ENCODE measurements at regions of chr6 and their contacts with region 1.

Region 1: DNA sequence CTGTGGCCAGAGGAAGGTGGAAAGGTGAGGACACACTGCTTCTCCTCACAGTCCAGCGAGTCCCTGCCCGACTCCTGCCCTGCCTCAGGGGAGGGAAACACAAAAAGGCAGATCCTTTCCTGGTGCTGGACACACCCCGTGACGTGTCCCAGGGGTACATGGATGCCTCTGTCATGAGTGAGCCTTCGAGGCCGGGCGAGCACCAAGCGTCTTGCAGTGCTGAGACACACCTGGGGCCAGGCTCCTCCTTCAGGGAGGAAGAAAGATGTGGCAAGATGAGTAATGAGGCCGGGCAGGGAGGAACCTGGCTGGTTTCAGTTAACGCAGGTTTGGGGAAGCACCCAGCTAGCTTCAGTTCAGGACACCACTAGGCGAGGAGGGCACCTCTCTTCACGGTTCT is 215.1 kb downstream of the LY86 start:
- DNase-seq: peak; percentile 97
- ATAC-seq: peak; percentile 93
- H3K4me3 ChIP-seq: peak overlapping the region; percentile 8 to 21; a peak in 3 of 4 replicates
- H3K27ac ChIP-seq: peak overlapping the region; percentile 33
- H3K4me1 ChIP-seq: peaks cover 21 to 92% of the 10 kb centered on the region in 2 experiments
- H3K27me3 ChIP-seq: no peaks in the 10 kb centered on the region
- CTCF ChIP-seq: no peak
- POLR2A ChIP-seq: no peak
- RAD21 ChIP-seq: no peak

Region 2: DNA sequence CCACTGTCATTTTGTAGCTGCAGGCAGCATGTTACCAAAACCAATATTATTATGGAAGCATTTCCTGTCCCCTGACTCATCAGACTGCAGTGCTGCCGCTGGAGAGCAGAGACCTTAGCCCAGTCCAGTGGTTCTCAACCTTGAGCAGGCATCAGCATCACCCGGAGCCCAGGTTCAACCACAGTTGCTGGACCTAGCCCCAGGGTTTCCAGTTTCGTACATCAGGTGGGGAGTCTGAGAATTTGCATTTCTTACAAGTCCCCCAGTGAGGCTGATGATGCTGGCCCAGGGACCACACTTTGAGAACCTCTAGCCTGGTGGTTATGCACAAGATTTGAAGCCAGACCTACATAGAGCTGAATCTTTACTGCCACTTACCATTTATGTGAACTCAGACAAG is 167.7 kb before region 1 on chr6:
- CTCF ChIA-PET with region 1: no interaction called
- POLR2A ChIA-PET with region 1: no interaction called
- RAD21 ChIA-PET with region 1: no interaction called
- intact Hi-C with region 1: no loop called
- DNase-seq: no peak
- ATAC-seq: no peak
- H3K4me3 ChIP-seq: no peak overlapping the region
- H3K27ac ChIP-seq: no peak overlapping the region
- H3K4me1 ChIP-seq: no peaks in the 10 kb centered on the region
- H3K27me3 ChIP-seq: peaks cover 4% of the 10 kb centered on the region; the same call in 1 of the 2 replicates
- CTCF ChIP-seq: no peak
- POLR2A ChIP-seq: no peak
- RAD21 ChIP-seq: no peak

Region 3: DNA sequence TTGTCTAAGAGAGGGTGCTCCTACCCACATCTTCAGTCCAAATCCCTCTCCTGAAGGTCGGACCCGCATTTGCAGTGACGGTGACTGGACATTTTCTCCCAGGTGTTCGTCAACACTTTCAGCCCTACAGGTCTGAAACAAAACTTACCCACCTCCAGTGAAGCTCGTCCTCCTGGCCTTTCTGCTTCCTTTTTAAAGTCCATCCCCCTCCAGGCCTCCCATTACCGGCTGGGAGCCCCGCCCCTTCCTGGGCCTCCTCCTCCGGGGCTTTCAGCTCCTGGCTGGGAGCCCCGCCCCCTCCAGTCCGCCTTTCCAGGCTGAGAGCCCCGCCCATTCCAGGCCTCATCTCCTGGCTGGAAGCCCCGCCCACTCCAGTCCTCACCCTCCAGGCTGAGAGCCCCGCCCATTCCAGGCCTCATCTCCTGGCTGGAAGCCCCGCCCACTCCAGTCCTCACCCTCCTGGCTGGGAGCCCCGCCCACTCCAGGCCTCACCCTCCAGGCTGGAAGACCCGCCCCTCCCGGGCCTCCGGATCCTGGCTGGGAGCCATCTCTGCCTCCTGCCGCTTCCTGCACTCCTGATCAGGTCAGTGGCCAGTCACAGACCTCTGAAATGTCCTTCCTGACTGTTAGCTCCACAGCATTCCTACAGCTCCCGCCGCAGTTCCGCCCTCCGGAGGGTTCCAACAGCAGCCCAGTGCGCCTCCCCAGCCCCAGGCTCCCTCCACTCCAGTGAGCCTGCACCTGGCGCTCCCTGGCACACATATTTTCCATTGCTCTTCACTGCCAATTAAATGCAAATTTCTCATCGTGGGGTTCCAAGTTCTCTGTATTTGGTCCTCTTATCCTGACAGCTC is 116.6 kb before region 1 on chr6:
- CTCF ChIA-PET with region 1: no interaction called
- POLR2A ChIA-PET with region 1: no interaction called
- RAD21 ChIA-PET with region 1: no interaction called
- intact Hi-C with region 1: loop called (anchors 5 kb)
- DNase-seq: peak; percentile 93
- ATAC-seq: peak; percentile 94
- H3K4me3 ChIP-seq: peak overlapping the region; percentile 67 to 69
- H3K27ac ChIP-seq: peak overlapping the region; percentile 68
- H3K4me1 ChIP-seq: peaks cover 0 to 19% of the 10 kb centered on the region in 2 experiments; a peak in 3 of 4 replicates
- H3K27me3 ChIP-seq: no peaks in the 10 kb centered on the region
- CTCF ChIP-seq: no peak
- POLR2A ChIP-seq: peak; percentile 36
- RAD21 ChIP-seq: no peak

Region 4: GRCh38 chr6:6826095-6826901 is 22.7 kb after region 1 on chr6:
- CTCF ChIA-PET with region 1: no interaction called
- POLR2A ChIA-PET with region 1: interaction called, 13 read pairs
- RAD21 ChIA-PET with region 1: no interaction called
- intact Hi-C with region 1: no loop called
- DNase-seq: no peak
- ATAC-seq: peak; percentile 74
- H3K4me3 ChIP-seq: peak overlapping the region in 1 of 2 experiments; percentile 22; a peak in 2 of 4 replicates
- H3K27ac ChIP-seq: peak overlapping the region; percentile 69
- H3K4me1 ChIP-seq: peaks cover 44 to 57% of the 10 kb centered on the region in 2 experiments
- H3K27me3 ChIP-seq: no peaks in the 10 kb centered on the region
- CTCF ChIP-seq: no peak
- POLR2A ChIP-seq: no peak
- RAD21 ChIP-seq: no peak

Region 5: GRCh38 chr6:6890400-6890858 is 86.9 kb after region 1 on chr6:
- CTCF ChIA-PET with region 1: no interaction called
- POLR2A ChIA-PET with region 1: no interaction called
- RAD21 ChIA-PET with region 1: no interaction called
- intact Hi-C with region 1: no loop called
- DNase-seq: no peak
- ATAC-seq: peak; percentile 81
- H3K4me3 ChIP-seq: no peak overlapping the region
- H3K27ac ChIP-seq: no peak overlapping the region
- H3K4me1 ChIP-seq: peaks cover 0 to 21% of the 10 kb centered on the region in 2 experiments; a peak in 2 of 4 replicates
- H3K27me3 ChIP-seq: no peaks in the 10 kb centered on the region
- CTCF ChIP-seq: no peak
- POLR2A ChIP-seq: no peak
- RAD21 ChIP-seq: no peak

Measured in HCT116 (cell line).